ENCODE measurements at regions of chr9 and their contacts with region 1.

Region 1: DNA sequence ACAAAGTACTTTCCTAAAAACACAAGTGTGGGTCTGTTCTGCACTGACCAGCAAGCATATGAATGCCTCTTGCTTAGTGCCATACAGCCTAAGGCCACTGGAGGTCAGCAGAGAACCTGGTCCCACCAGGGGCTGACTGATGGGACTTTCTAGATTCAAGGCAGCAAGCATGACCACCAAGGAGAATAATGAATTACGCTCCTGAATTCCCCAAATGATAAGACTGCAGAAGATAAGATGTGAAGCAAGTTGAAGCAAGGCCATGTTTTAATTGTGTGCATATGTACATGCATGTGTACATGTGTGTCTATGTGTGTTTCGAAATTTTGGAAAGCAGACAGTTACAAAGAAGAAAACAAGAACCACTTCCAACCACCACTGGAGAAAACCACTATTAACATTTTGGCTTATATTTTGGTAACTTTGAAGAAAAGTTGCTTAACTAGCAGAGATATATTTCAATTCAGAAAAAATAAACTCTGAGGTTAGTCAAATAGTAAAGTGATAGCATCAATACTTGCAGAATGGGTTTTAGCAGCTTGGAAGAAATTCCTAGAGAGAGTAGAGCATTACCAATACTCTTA is 70.5 kb downstream of the ERP44 start:
- DNase-seq: peak; percentile 49
- H3K4me3 ChIP-seq: no peak overlapping the region
- H3K27ac ChIP-seq: no peak overlapping the region
- H3K4me1 ChIP-seq: no peaks in the 10 kb centered on the region
- H3K27me3 ChIP-seq: no peaks in the 10 kb centered on the region
- CTCF ChIP-seq: peak; percentile 24 to 78 (median 66)
- POLR2A ChIP-seq: no peak

Region 2: GRCh38 chr9:99266255-99267023 is 761.9 kb before region 1 on chr9:
- intact Hi-C with region 1: loop called (anchors 10 kb)
- DNase-seq: peak; percentile 20
- H3K4me3 ChIP-seq: no peak overlapping the region
- H3K27ac ChIP-seq: no peak overlapping the region
- H3K4me1 ChIP-seq: no peaks in the 10 kb centered on the region
- H3K27me3 ChIP-seq: no peaks in the 10 kb centered on the region
- CTCF ChIP-seq: peak; percentile 35 to 63 (median 48)
- POLR2A ChIP-seq: no peak

Region 3: GRCh38 chr9:100222674-100223073 is 194.4 kb after region 1 on chr9:
- intact Hi-C with region 1: loop called (anchors 5 kb)
- DNase-seq: no peak
- H3K4me3 ChIP-seq: no peak overlapping the region
- H3K27ac ChIP-seq: no peak overlapping the region
- H3K4me1 ChIP-seq: no peaks in the 10 kb centered on the region
- H3K27me3 ChIP-seq: no peaks in the 10 kb centered on the region
- CTCF ChIP-seq: peak in 1 of 4 experiments; percentile 44
- POLR2A ChIP-seq: no peak

Region 4: GRCh38 chr9:100322954-100323536 is 294.8 kb after region 1 on chr9:
- intact Hi-C with region 1: loop called (anchors 10 kb)
- DNase-seq: peak; percentile 20
- H3K4me3 ChIP-seq: no peak overlapping the region
- H3K27ac ChIP-seq: no peak overlapping the region
- H3K4me1 ChIP-seq: no peaks in the 10 kb centered on the region
- H3K27me3 ChIP-seq: no peaks in the 10 kb centered on the region
- CTCF ChIP-seq: peak; percentile 13 to 69 (median 62)
- POLR2A ChIP-seq: no peak